GM18951 (cell line): ENCODE measurements at regions of chr7 and their contacts with region 1.

Region 1: GRCh38 chr7:122528879-122529481 is 169.9 kb downstream of the RNF133 start:
- POLR2A ChIP-seq: no peak

Region 2: GRCh38 chr7:121994625-121995410 is 534.2 kb before region 1 on chr7:
- in situ Hi-C with region 1: no loop called
- POLR2A ChIP-seq: no peak

Region 3: DNA sequence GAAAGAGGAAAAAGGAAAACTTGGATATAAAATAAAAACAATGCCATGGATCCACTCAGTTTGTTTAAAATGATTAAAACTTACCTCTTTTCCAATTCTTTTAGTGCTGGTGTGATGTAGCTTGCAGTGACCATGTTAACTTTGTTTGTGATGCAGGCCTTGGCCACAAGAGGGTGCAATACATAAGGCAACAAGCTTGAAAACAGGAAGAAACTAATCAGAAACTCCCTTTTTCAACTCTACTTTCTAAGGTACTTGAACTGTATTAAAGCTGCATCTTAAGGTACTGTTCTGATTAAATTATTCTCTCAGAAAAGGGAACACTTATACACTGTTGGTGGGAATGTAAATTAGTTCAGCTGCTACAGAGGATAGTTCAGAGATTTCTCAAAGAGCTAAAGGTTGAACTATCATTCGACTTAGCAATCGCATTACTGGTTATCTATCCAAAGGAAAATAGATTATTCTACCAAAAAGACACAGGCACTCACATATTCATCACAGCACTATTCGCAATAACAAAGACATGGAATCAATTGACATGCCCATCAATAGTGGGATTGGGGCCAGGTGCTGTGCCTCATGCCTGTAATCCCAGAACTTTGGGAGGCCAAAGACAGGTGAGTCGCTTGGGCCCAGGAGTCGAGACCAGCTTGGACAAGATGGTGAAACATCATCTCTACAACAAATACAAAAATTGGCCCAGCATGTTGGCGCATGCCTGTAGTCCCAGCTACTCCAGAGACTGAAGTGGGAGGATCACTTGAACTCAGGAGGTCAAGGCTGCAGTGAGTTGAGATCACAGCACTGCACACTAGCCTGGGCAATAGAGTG is 435.8 kb before region 1 on chr7:
- in situ Hi-C with region 1: loop called (anchors 25 kb)
- POLR2A ChIP-seq: no peak

Region 4: DNA sequence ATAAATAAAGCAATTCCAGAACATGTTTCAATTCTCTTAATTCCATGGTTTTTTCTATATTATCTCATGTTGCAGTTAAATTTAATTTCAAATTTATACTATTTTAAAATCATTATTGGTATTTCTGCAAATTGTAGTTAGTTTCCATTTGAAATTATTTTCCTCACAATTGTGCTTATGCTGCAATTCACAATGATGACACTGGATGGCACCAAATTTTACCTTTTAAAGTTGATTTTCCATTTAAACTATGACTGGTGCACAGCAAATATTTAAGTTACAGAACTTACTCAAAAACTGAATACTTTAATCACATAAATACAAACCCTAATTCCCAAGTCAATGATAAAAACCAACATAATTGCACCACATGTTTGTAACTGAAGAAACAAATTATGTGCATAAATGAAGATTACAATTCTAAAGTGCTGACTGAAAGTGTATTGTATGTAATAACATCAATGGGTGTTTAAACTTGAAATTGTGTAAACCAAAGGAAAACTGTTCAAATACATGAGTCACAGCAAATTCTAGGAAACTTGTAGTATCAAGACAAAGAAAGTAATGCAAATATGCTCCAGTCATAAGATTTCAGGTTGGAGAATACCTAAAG is 309.6 kb before region 1 on chr7:
- in situ Hi-C with region 1: loop called (anchors 25 kb)
- POLR2A ChIP-seq: no peak